IMR-90 (cell line): ENCODE measurements at regions of chr7 and their contacts with region 1.

Region 1: DNA sequence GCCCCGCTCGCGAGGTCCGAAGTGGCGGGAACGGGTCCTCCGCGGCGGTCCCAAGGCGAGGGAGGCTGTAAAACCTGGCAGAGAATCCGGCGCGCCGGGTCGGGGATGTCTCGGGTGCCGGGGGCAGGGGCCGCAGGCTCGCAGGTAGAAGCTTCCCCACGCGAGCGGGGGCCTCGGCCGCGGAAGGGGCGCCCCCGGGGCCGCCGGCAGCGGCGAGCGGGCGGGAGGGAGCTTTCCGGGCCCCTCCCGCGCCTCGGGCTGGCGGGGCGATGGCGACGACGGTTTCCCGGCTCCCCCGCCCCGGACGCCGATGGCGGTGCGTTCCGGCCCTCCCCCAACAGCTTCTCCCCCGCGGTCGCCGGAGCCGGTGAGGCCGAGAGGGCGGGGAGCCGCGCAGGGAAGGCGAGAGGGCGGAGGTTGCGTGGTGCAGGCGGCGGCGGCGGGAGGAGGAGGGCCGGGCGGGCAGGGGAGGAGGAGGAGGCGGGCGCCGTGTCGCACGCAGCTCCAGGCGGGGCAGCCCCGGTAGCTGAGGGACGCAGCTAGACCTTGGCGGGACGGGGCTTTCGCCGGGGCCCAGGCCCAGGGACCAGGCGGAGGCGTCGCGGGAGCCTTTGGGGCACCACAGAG is at the start of gene CUL1:
- DNase-seq: peak; percentile 52
- ATAC-seq: peak; percentile 83
- H3K4me3 ChIP-seq: peak within 1 kb of the TSS; percentile 92
- H3K27ac ChIP-seq: peak within 1 kb of the TSS; percentile 90
- H3K4me1 ChIP-seq: peaks cover 10% of the 10 kb centered on the region
- H3K27me3 ChIP-seq: no peaks in the 10 kb centered on the region
- CTCF ChIP-seq: no peak
- POLR2A ChIP-seq: no peak; the same call in 1 of the 2 replicates
- RAD21 ChIP-seq: no peak
- total RNA-seq, gene CUL1: 46.2 and 61.4 TPM in 2 replicates

Region 2: DNA sequence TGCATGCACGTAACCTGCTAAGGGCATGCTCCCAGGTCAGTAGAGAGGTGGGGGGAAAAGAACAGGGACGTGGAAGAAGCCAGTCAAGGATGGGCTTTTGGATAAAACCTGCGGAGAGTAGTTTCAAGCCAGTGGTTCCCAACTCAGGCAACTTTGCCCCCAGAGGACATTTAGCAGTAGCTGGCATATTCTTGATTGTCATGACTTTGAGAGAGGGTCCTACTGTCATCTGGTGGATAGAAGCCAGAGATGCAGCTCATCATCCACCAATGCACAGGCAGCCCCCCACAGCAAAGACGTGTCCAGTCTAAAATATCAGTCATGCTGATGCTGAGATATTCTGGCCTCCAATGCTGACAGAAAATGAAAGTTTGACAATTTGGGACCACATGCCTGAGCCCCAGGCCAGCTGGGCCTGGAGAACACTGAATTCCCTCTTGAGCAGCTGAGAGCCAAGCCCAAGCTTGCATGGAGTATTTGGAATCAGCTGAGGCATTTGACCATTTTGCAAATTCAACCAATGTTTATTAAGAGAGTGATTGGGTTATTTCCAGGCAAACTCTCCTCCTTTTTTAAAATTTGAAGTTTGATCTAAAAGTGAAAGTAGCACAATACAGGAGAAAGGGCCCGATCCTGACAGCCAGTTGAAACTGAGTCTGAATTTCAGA is 217.9 kb before region 1 on chr7:
- CTCF ChIA-PET with region 1: no interaction called
- POLR2A ChIA-PET with region 1: no interaction called
- dilution Hi-C with region 1: no loop called
- in situ Hi-C with region 1: no loop called
- intact Hi-C with region 1: no loop called
- DNase-seq: no peak
- ATAC-seq: no peak
- H3K4me3 ChIP-seq: no peak overlapping the region
- H3K27ac ChIP-seq: no peak overlapping the region
- H3K4me1 ChIP-seq: no peaks in the 10 kb centered on the region
- H3K27me3 ChIP-seq: no peaks in the 10 kb centered on the region
- CTCF ChIP-seq: no peak
- POLR2A ChIP-seq: no peak
- RAD21 ChIP-seq: no peak

Region 3: DNA sequence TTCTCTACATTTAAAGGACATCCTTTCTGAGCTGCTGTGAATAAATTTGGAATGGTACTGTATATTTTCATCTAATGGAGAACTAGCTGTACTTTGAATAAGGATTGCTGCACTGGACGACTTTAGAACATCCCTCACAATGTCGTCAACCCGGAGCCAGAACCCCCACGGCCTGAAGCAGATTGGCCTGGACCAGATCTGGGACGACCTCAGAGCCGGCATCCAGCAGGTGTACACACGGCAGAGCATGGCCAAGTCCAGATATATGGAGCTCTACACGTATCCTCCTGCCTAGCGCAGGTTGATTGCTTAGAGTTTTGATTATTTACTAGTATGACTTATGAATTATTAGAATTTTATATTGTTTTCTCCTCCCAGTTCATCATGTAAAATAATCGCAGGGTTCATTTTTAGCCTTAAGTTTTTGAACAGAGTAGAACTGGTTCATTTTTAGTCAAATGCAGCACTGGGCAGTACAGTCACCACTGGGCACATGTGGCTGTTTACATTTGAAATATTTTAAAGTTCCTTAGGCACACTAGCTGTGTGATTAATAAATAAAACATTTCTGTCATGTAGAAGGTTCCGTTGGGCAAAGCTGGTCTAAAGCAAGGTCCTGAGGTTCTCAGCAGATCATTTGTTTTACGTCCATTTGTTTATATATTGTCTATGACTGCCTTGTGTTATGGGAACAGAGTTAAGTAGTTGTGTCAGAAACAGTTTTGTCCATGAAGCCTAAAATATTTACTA is 31.6 kb after region 1 on chr7:
- CTCF ChIA-PET with region 1: no interaction called
- POLR2A ChIA-PET with region 1: no interaction called
- dilution Hi-C with region 1: no loop called
- in situ Hi-C with region 1: no loop called
- intact Hi-C with region 1: loop called (anchors 2 kb)
- DNase-seq: peak; percentile 80
- ATAC-seq: peak; percentile 94
- H3K4me3 ChIP-seq: no peak overlapping the region
- H3K27ac ChIP-seq: peak overlapping the region; percentile 58
- H3K4me1 ChIP-seq: peaks cover 26% of the 10 kb centered on the region
- H3K27me3 ChIP-seq: no peaks in the 10 kb centered on the region
- CTCF ChIP-seq: no peak
- POLR2A ChIP-seq: no peak
- RAD21 ChIP-seq: no peak

Region 4: GRCh38 chr7:148773334-148773733 is 74.8 kb after region 1 on chr7:
- CTCF ChIA-PET with region 1: no interaction called
- POLR2A ChIA-PET with region 1: no interaction called
- dilution Hi-C with region 1: no loop called
- in situ Hi-C with region 1: no loop called
- intact Hi-C with region 1: loop called (anchors 2 kb)
- DNase-seq: no peak
- ATAC-seq: no peak
- H3K4me3 ChIP-seq: no peak overlapping the region
- H3K27ac ChIP-seq: peak overlapping the region; percentile 37
- H3K4me1 ChIP-seq: peaks cover 5% of the 10 kb centered on the region
- H3K27me3 ChIP-seq: no peaks in the 10 kb centered on the region
- CTCF ChIP-seq: no peak
- POLR2A ChIP-seq: no peak
- RAD21 ChIP-seq: no peak

Region 5: GRCh38 chr7:148884299-148885022 is 186.0 kb after region 1 on chr7:
- CTCF ChIA-PET with region 1: no interaction called
- POLR2A ChIA-PET with region 1: no interaction called
- dilution Hi-C with region 1: no loop called
- in situ Hi-C with region 1: no loop called
- intact Hi-C with region 1: loop called (anchors 2 kb)
- DNase-seq: peak; percentile 87
- ATAC-seq: peak; percentile 95
- H3K4me3 ChIP-seq: peak overlapping the region; percentile 95
- H3K27ac ChIP-seq: peak overlapping the region; percentile 95
- H3K4me1 ChIP-seq: peaks cover 2% of the 10 kb centered on the region; the same call in 1 of the 2 replicates
- H3K27me3 ChIP-seq: no peaks in the 10 kb centered on the region
- CTCF ChIP-seq: no peak
- POLR2A ChIP-seq: peak; percentile 71; the same call in 1 of the 2 replicates
- RAD21 ChIP-seq: no peak

Region 6: GRCh38 chr7:148962823-148963582 is 264.5 kb after region 1 on chr7:
- CTCF ChIA-PET with region 1: no interaction called
- POLR2A ChIA-PET with region 1: no interaction called
- dilution Hi-C with region 1: no loop called
- in situ Hi-C with region 1: no loop called
- intact Hi-C with region 1: loop called (anchors 2 kb)
- DNase-seq: peak; percentile 67
- ATAC-seq: peak; percentile 69
- H3K4me3 ChIP-seq: peak overlapping the region; percentile 62
- H3K27ac ChIP-seq: no peak overlapping the region
- H3K4me1 ChIP-seq: no peaks in the 10 kb centered on the region
- H3K27me3 ChIP-seq: peaks cover 3% of the 10 kb centered on the region; the same call in 1 of the 2 replicates
- CTCF ChIP-seq: peak; percentile 88
- POLR2A ChIP-seq: 0 out of 2 replicates have a peak, but pooled peaks have one; percentile 30
- RAD21 ChIP-seq: peak; percentile 96